Activated CD8-positive, alpha-beta T cell treated with anti-CD3 and anti-CD28 coated beads, Interleukin-2, amount 10 ng/mL, durations not matched to agents 7 days and 5 days (primary cell): ENCODE measurements at regions of chr10 and their contacts with region 1.

Region 1: DNA sequence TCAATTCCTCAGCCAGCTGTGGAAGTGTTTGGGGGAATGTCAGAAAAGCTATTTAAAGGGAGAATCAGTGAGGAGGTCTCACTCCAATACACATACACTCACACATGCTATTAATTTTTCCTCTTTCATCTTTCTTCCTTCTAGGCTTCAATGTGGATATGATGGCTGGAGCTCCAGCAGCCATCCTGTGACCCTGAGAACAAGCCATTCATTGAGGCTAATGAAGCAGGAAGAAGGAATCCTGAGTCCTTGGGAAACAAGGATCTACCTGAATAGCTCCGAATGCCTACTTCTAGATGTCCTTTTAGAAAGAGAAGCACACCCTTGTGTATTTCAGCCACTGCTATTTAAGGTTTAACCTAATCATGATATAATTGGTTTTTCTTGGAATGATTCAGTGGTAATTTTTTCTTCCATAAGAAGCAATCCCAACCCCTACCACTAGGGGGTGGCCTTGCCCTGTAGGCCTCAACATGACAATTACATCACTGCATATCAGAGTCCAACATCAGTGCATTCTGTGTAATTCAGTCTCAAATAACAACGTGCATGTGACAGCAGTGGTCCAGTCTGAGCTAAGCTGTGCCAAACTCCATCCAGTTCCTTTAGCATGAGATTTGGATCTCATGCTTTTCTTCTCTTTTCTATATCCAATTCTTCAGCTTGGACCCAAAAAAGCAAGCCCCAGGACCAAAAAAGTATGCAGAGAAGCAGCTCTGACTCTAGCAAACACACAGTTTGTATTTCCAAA is 85.3 kb upstream of the ANKRD1 start:
- DNase-seq: peak; percentile 80
- ATAC-seq: peak; percentile 75
- H3K4me3 Mint-ChIP-seq: peak overlapping the region; percentile 56
- H3K27ac Mint-ChIP-seq: peak overlapping the region; percentile 78
- H3K4me1 Mint-ChIP-seq: peaks cover 38% of the 10 kb centered on the region
- H3K27me3 Mint-ChIP-seq: peaks cover 15% of the 10 kb centered on the region

Region 2: DNA sequence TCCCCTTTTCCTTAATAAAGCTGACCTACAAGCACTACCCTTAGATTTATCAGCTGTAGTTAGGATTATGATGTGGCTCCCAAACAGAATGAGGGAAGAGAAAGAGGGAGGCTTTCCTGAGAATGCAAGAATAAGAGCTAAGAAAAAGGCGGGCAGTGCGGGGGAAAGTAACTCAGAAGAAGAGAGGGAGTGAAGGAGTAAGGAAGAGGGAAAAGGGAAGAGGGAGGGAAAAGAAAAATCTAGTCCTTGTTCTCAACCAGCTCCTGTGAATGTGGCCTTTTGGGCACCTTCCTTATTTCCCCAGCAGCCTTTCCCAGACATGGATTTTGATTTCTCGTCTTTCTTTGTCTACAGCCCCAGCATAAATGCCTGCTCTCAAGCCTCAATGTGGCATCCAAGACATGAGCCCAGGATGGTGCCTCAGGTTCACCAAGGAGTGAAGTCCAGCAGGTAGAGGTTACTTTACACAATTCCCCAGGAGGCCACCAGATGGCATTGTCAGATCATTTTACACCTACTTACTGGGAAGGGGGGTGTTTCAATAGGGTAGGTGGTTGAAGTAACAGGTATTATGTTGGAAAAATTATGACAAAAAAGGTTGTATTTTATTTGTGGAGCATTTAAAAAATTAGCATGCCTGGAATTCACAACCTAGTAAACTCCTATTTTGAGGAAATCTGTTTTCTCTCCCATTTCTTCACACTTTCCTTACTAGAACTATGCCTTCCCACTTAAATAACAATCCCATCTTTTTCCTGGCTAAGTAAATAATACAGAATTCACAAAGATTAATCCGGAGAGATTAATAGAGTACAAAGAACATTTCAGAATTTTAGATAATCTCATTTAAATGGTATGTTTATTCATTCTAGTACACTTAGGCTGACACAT is 254.8 kb before region 1 on chr10:
- CTCF ChIA-PET with region 1: no interaction called
- POLR2A ChIA-PET with region 1: no interaction called
- DNase-seq: peak; percentile 50
- ATAC-seq: no peak
- H3K4me3 Mint-ChIP-seq: no peak overlapping the region
- H3K27ac Mint-ChIP-seq: no peak overlapping the region
- H3K4me1 Mint-ChIP-seq: no peaks in the 10 kb centered on the region
- H3K27me3 Mint-ChIP-seq: peaks cover 20% of the 10 kb centered on the region

Region 3: GRCh38 chr10:90822508-90822907 is 183.7 kb before region 1 on chr10:
- CTCF ChIA-PET with region 1: no interaction called
- POLR2A ChIA-PET with region 1: no interaction called
- DNase-seq: no peak
- ATAC-seq: no peak
- H3K4me3 Mint-ChIP-seq: no peak overlapping the region
- H3K27ac Mint-ChIP-seq: no peak overlapping the region
- H3K4me1 Mint-ChIP-seq: no peaks in the 10 kb centered on the region
- H3K27me3 Mint-ChIP-seq: peaks cover 10% of the 10 kb centered on the region

Region 4: GRCh38 chr10:90879062-90879461 is 127.1 kb before region 1 on chr10:
- CTCF ChIA-PET with region 1: interaction called, 15 read pairs
- POLR2A ChIA-PET with region 1: no interaction called
- DNase-seq: no peak
- ATAC-seq: no peak
- H3K4me3 Mint-ChIP-seq: no peak overlapping the region
- H3K27ac Mint-ChIP-seq: no peak overlapping the region
- H3K4me1 Mint-ChIP-seq: peaks cover 4% of the 10 kb centered on the region
- H3K27me3 Mint-ChIP-seq: no peaks in the 10 kb centered on the region

Region 5: GRCh38 chr10:90890347-90890746 is 115.8 kb before region 1 on chr10:
- CTCF ChIA-PET with region 1: no interaction called
- POLR2A ChIA-PET with region 1: no interaction called
- DNase-seq: no peak
- ATAC-seq: no peak
- H3K4me3 Mint-ChIP-seq: no peak overlapping the region
- H3K27ac Mint-ChIP-seq: no peak overlapping the region
- H3K4me1 Mint-ChIP-seq: peaks cover 7% of the 10 kb centered on the region
- H3K27me3 Mint-ChIP-seq: no peaks in the 10 kb centered on the region

Region 6: GRCh38 chr10:90960355-90960814 is 45.8 kb before region 1 on chr10:
- CTCF ChIA-PET with region 1: no interaction called
- POLR2A ChIA-PET with region 1: no interaction called
- DNase-seq: no peak
- ATAC-seq: no peak
- H3K4me3 Mint-ChIP-seq: no peak overlapping the region
- H3K27ac Mint-ChIP-seq: no peak overlapping the region
- H3K4me1 Mint-ChIP-seq: no peaks in the 10 kb centered on the region
- H3K27me3 Mint-ChIP-seq: peaks cover 4% of the 10 kb centered on the region

Region 7: DNA sequence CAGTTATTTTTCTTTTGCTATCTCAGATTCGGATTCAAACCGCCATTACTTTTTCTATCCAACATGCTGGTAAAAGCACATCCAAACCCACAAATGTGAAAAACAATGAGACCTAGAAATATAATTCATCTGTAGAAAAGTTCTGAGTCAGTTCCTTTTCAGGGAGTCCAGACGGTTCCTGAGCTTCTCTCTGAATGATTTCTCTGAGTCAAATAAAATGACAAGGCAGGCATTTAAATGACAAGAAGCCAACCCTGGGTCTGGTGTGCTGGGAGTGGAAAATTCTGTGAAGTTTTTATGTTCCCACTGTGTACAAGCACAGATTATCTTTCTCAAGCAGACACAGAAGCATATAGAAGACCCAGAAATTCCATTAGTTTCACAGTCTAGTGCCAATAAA is 11.0 kb after region 1 on chr10:
- CTCF ChIA-PET with region 1: interaction called, 28 read pairs
- POLR2A ChIA-PET with region 1: no interaction called
- DNase-seq: no peak
- ATAC-seq: no peak
- H3K4me3 Mint-ChIP-seq: no peak overlapping the region
- H3K27ac Mint-ChIP-seq: no peak overlapping the region
- H3K4me1 Mint-ChIP-seq: no peaks in the 10 kb centered on the region
- H3K27me3 Mint-ChIP-seq: peaks cover 41% of the 10 kb centered on the region

Region 8: GRCh38 chr10:91088300-91089140 is 82.3 kb after region 1 on chr10:
- CTCF ChIA-PET with region 1: interaction called, 22 read pairs
- POLR2A ChIA-PET with region 1: no interaction called
- DNase-seq: no peak
- ATAC-seq: no peak
- H3K4me3 Mint-ChIP-seq: no peak overlapping the region
- H3K27ac Mint-ChIP-seq: no peak overlapping the region
- H3K4me1 Mint-ChIP-seq: no peaks in the 10 kb centered on the region
- H3K27me3 Mint-ChIP-seq: peaks cover 2% of the 10 kb centered on the region

Region 9: DNA sequence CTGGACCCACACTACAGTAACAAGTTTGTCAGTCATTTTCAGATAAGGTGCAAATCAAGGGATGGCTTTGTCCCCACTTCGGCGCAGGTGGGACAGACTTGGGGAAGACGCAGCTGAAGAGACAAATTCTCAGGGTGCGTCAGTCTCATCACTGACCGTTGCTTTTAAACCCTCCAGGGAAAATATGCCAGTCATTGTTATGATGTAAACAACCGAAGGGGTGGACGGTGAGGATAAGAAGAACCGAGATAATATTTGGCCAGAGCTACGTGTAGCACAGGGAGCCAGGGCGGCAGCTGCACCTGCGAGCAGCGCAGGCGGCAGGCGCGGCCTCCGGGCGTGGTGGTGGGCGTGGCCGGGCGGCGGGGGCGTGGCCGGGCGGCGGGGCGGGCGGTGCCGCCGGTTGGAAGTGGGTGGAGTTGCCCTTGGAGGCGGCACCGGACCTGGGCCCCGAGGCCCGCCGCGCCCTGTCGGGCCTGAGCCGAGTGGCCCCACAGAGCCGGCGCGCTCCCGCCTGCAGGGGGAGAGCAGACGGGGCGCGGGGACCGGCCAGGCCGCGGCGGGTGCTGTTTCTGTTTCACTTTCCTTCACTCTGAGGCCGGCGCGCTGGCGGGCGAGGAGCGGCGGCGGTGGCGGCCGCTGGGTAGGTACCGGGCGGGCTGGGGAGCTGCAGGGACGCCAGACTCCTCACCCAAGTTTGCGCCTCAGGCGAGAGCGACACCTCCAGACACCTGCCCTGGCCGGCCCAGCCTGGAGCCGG is 214.2 kb after region 1 on chr10 and contains the start of gene PCGF5:
- CTCF ChIA-PET with region 1: interaction called, 17 read pairs
- POLR2A ChIA-PET with region 1: interaction called, 3 read pairs
- DNase-seq: peak; percentile 92
- ATAC-seq: peak; percentile 99
- H3K4me3 Mint-ChIP-seq: peak within 1 kb of the TSS; percentile 94
- H3K27ac Mint-ChIP-seq: peak within 1 kb of the TSS; percentile 90
- H3K4me1 Mint-ChIP-seq: peaks cover 43% of the 10 kb centered on the region
- H3K27me3 Mint-ChIP-seq: no peaks in the 10 kb centered on the region
- total RNA-seq, gene PCGF5: 46.2 to 46.7 TPM

Region 10: DNA sequence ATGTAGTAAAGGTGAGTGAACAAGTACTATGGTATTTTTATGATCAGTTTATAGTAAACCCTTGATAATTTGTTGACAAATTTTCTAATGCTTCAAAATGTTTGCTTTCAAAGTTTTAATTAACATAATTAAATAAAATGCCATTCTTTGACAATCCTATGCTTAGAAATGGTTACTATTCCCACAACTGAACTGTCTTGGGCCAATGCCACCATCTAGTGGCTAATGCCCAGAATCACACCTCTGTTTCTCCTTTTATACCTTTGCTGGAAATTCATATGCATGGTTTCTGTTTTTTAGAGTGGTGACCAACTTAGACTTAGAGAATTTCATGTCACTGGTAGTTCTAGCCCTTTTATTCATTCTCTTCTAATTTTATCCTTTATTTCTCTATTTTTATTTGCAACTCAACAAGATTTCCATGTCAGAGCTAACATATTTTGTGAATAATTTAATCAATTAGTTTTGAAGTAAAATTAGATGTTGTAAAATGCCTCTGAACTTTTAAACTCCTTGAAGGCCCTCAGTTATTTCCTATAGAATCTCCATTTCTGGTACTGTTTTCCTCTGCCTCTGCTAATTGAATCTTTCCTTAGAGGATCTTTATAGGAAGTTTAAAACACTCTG is 245.4 kb after region 1 on chr10:
- CTCF ChIA-PET with region 1: interaction called, 251 read pairs
- POLR2A ChIA-PET with region 1: no interaction called
- DNase-seq: peak; percentile 64
- ATAC-seq: peak; percentile 70
- H3K4me3 Mint-ChIP-seq: no peak overlapping the region
- H3K27ac Mint-ChIP-seq: no peak overlapping the region
- H3K4me1 Mint-ChIP-seq: peaks cover 8% of the 10 kb centered on the region
- H3K27me3 Mint-ChIP-seq: no peaks in the 10 kb centered on the region